Activated naive CD4-positive, alpha-beta T cell treated with anti-CD3 and anti-CD28 coated beads for 36 hours (primary cell): ENCODE measurements at regions of chr17 and their contacts with region 1.

Region 1: DNA sequence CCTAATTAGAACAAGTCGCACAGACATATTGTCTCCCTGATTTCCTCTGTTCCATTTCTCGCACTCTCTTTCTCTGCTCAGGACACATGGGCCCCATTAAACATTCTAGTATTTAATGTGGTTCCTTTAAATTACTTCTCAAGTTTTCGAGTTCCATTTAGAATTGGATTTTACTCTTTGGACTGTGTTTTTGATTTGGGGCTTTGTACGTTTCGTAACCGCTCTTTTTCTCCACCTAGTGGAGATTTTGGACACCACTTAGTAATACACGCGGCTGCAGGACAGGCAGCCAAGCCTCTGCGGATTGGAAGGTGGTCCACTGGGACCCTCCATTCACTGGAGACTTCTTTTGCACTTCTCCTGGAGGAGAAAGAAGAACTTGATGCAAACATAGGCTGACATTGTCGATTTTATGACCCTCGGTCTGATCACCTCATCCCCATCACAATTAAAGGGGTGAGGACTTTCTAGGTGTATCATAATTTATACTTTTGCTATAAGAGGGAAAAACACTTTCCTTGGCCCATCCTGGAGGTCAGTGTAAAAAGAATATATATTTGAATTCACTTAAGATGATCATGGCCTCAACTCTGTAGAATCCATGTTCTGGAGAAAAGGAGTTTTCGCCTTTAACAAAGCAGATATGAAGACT is 85.7 kb downstream of the NOG start:
- DNase-seq: no peak
- H3K4me3 Mint-ChIP-seq: peak overlapping the region; percentile 69
- H3K27ac Mint-ChIP-seq: no peak overlapping the region
- H3K4me1 Mint-ChIP-seq: peaks cover 19% of the 10 kb centered on the region
- H3K27me3 Mint-ChIP-seq: peaks cover 33% of the 10 kb centered on the region

Region 2: GRCh38 chr17:56499799-56500388 is 179.3 kb before region 1 on chr17:
- CTCF ChIA-PET with region 1: interaction called, 8 read pairs
- intact Hi-C with region 1: loop called (anchors 1 kb)
- DNase-seq: peak; percentile 64
- H3K4me3 Mint-ChIP-seq: no peak overlapping the region
- H3K27ac Mint-ChIP-seq: no peak overlapping the region
- H3K4me1 Mint-ChIP-seq: no peaks in the 10 kb centered on the region
- H3K27me3 Mint-ChIP-seq: no peaks in the 10 kb centered on the region

Region 3: DNA sequence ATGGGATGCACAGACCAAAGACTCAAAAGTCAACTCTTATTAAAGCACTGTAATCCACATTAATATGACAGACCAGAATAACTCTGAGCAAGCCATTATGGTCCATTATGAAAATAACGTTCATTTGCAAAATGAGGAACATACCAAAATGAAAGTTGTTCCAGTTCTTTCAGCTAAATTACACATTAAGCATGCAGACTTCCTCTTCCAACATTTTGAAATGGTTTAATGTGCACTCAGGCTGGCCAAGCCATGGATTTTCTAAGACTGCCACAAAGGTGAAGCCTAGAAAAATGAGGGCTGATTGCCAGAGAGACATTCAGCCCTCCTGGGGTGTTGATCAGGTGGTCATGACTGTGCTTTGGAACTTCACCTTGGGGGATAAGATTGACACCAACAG is 142.5 kb before region 1 on chr17:
- CTCF ChIA-PET with region 1: no interaction called
- intact Hi-C with region 1: no loop called
- DNase-seq: no peak
- H3K4me3 Mint-ChIP-seq: no peak overlapping the region
- H3K27ac Mint-ChIP-seq: no peak overlapping the region
- H3K4me1 Mint-ChIP-seq: no peaks in the 10 kb centered on the region
- H3K27me3 Mint-ChIP-seq: peaks cover 6% of the 10 kb centered on the region

Region 4: GRCh38 chr17:56653877-56654276 is 25.4 kb before region 1 on chr17:
- CTCF ChIA-PET with region 1: interaction called, 7 read pairs
- intact Hi-C with region 1: loop called (anchors 2 kb)
- DNase-seq: peak; percentile 90
- H3K4me3 Mint-ChIP-seq: no peak overlapping the region
- H3K27ac Mint-ChIP-seq: no peak overlapping the region
- H3K4me1 Mint-ChIP-seq: peaks cover 5% of the 10 kb centered on the region
- H3K27me3 Mint-ChIP-seq: no peaks in the 10 kb centered on the region

Region 5: DNA sequence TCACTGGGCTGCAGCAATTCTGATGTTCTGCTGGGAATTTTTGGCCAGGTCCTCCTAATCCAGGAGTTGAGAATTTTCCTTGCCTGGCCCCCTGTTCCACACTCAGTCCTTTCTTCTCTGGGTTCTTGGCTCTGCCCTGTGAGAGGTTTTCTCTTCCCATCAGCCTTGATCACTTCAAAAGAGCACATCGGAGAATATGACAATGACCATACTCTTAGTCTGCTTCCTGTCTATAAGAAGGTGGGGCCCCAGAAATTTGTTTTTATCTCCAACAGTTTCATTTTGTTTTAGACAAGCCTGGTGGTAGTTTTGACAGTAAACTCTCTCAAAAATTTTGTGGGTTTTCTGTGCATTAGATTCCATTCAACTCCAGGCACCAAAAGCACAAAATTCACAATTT is 83.7 kb after region 1 on chr17:
- CTCF ChIA-PET with region 1: no interaction called
- intact Hi-C with region 1: loop called (anchors 5 kb)
- DNase-seq: peak; percentile 37
- H3K4me3 Mint-ChIP-seq: peak overlapping the region; percentile 26
- H3K27ac Mint-ChIP-seq: peak overlapping the region; percentile 75
- H3K4me1 Mint-ChIP-seq: peaks cover 25% of the 10 kb centered on the region
- H3K27me3 Mint-ChIP-seq: no peaks in the 10 kb centered on the region